ENCODE measurements at regions of chr6 and their contacts with region 1.

Region 1: GRCh38 chr6:117482240-117483003 is at the start of gene DCBLD1:
- DNase-seq: peak; percentile 84 to 91 (median 91)
- ATAC-seq: peak; percentile 87
- H3K4me3 ChIP-seq: peak within 1 kb of the TSS; percentile 56
- H3K4me1 ChIP-seq: peaks cover 12% of the 10 kb centered on the region
- CTCF ChIP-seq: no peak
- total RNA-seq, gene DCBLD1: 11.3 to 16.8 (median 11.4) TPM

Region 2: DNA sequence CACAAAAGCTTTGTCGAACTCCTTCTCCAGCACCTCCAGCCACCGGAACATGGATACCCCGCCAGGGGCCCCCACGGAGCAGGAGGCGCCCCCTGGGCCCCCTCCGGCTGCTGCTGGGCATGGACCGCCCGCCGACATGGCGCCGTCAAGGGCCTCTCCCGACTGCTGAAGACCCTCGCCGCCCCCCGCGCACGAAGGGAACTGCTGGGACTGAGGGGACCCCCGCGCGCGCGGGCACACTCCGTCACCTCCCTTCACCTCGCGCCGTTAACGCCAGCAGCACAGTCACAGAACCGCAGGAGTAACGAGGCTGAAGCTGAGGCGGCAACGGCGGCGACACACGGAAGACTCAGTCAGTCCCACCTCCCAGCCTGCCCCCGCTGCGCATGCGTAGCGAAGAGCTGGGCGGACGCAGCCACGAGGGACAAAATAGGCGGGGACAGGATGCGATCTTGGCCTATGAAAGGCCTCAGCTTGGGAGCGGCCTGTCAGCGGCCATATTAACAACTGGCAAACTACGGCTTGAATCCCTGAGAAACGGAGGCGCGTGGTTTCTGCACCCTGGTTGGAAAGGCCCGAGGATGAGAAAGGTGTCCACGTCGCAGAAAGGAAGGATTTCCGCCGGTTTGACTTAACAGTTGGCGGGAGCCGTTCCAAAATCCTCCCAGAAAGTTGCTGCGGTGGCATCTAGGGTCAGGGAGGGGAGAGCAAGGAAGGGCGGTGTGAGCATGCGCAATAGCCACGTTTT is 119.9 kb after region 1 on chr6 and contains the start of gene GOPC:
- intact Hi-C with region 1: loop called in 1 of 2 experiments (anchors 10 kb)
- DNase-seq: peak; percentile 95 to 98 (median 96)
- ATAC-seq: peak; percentile 97
- H3K4me3 ChIP-seq: peak within 1 kb of the TSS; percentile 88
- H3K4me1 ChIP-seq: peaks cover 15% of the 10 kb centered on the region
- CTCF ChIP-seq: no peak
- total RNA-seq, gene GOPC: 22.7 to 31.4 (median 26.3) TPM